IMR-90 (cell line): ENCODE measurements at regions of chr3 and their contacts with region 1.

Region 1: DNA sequence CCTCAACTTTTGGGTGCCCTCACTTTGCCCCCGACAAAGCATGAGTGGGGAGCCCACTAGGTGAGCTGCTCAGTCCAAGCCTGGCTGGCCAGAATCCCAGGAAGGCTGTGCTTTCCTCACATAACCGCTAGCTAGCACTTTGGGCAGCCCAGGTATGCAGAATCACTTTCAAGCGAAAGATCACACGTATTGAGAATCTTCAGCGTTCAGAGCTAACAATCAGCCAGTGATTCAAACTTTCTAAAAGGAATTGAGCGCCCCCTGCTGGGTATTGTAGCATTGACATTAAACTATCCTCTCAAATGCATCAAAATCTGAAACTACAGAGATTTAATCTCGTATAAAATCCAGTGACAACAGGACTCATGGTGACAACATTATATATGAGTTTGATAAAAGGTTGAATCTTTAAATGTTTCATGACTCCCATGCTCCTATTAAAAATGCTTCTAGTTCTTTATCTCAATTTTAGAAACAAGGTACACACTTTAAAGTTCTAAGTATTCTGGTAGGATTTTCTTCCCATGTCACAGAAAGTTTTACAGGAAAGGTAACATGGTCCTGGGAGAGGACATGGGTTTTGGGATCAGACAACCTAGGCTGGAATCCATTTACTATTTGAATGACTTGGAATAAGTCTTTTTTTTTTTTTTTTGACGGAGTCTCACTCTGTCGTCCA is 11.8 kb downstream of the ANAPC13 start:
- DNase-seq: peak; percentile 87
- ATAC-seq: peak; percentile 64
- H3K4me3 ChIP-seq: no peak overlapping the region
- H3K27ac ChIP-seq: peak overlapping the region; percentile 79
- H3K4me1 ChIP-seq: peaks cover 24% of the 10 kb centered on the region
- H3K27me3 ChIP-seq: no peaks in the 10 kb centered on the region
- CTCF ChIP-seq: peak; percentile 87
- POLR2A ChIP-seq: peak; percentile 52
- RAD21 ChIP-seq: peak; percentile 91

Region 2: DNA sequence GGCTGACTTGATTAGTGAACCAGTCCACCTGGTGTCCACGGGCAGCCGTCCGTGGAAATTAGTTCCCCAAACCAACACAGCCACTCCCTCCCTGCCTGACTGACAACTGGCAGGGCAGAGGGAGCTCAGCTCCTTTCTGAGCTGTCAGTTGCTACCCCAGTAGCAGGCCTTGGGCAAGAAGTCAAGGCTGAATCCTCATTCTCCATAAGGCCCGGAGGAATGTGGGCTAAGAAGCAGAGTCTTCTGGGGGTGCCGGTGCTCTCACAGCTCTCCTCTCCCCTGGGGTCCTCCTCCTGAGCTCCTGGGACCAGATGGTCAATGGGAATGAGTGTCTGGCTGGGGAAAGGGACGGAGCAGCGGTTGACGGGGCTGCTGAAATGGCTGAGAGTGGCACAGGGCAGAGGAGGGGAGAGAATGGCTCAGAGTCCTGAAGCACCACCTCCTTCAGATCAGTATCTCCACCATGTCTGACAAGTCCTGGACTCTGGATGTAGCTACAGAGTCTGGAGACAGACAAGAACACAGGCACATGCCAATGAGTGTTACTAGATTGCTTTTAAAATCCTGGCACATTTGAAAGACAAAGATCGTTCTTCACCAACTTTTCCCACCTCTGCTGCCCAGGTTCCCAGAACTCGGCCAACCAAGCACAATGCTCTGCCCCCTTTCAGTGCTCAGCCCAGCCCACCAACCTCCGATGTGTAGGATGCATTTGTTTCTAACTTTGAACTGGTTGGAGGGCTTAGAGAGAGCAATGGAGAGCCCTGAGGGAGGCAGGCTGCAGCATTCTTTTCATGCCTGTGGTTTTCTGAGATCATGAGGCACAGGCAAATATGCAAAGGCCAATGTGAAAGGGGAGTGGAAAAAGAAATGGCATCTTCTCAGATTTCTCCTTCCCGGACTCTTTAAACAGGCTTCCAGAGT is 116.5 kb before region 1 on chr3:
- CTCF ChIA-PET with region 1: interaction called, 4 read pairs
- POLR2A ChIA-PET with region 1: interaction called, 5 read pairs
- dilution Hi-C with region 1: no loop called
- in situ Hi-C with region 1: loop called (anchors 5 kb)
- intact Hi-C with region 1: loop called (anchors 2 kb)
- DNase-seq: peak; percentile 96
- ATAC-seq: peak; percentile 73
- H3K4me3 ChIP-seq: no peak overlapping the region
- H3K27ac ChIP-seq: peak overlapping the region; percentile 95
- H3K4me1 ChIP-seq: peaks cover 60% of the 10 kb centered on the region
- H3K27me3 ChIP-seq: no peaks in the 10 kb centered on the region
- CTCF ChIP-seq: no peak
- POLR2A ChIP-seq: peak; percentile 56
- RAD21 ChIP-seq: peak; percentile 36